Mucosa of descending colon (tissue), 3 donors: ENCODE measurements at regions of chr2 and their contacts with region 1.

Region 1: GRCh38 chr2:96951093-96951654 is 35.2 kb downstream of the FAM178B start:
- DNase-seq: peak; percentile 72 to 85 (median 81)
- ATAC-seq: peak; percentile 90
- H3K4me3 ChIP-seq: no peak overlapping the region
- H3K4me1 ChIP-seq: peaks cover 27% of the 10 kb centered on the region
- CTCF ChIP-seq: peak; percentile 85

Region 2: DNA sequence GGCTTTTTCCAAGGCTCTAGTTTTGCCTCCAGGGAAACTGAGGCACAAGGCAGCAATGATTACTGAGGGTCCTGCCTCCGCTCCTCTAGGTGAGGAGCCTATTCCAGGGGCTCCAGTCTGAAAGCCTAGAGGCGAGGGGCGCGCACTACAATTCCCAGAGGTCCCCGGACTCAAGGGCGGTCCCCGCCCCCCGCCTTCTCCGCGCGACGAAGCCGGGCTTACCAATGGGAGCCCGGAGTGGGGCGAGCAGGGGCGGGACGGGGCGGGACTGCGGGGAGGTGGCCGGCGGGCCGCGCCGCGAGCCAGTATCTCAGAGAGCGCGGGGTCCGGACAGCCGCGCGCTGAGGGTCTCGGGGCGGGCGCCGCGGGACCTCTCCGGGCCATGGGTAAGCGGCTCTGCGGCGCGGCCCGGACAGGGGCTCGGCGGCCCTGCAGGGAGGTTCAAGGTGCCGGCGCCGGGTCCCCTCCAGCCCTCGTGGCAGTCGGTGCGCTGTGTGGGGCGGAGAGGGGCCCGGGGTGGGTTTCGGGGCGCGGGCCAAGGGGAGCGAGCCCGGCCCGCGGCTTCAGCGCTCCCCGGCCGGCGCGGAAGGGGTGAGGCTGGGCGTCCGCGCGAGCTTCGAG is 414.6 kb before region 1 on chr2 and contains the start of gene ARID5A:
- intact Hi-C with region 1: no loop called
- DNase-seq: peak; percentile 95 to 97 (median 97)
- ATAC-seq: peak; percentile 78
- H3K4me3 ChIP-seq: peak within 1 kb of the TSS; percentile 59
- H3K4me1 ChIP-seq: peaks cover 52% of the 10 kb centered on the region
- CTCF ChIP-seq: no peak
- total RNA-seq, gene ARID5A: 4.8 to 17.6 (median 10.3) TPM

Region 3: GRCh38 chr2:96788442-96789244 is 162.5 kb before region 1 on chr2:
- intact Hi-C with region 1: no loop called
- DNase-seq: peak; percentile 84 to 90 (median 84)
- ATAC-seq: peak; percentile 89
- H3K4me3 ChIP-seq: no peak overlapping the region
- H3K4me1 ChIP-seq: peaks cover 45% of the 10 kb centered on the region
- CTCF ChIP-seq: no peak

Region 4: GRCh38 chr2:96856776-96857673 is 94.1 kb before region 1 on chr2:
- intact Hi-C with region 1: loop called in 1 of 2 experiments (anchors 5 kb)
- DNase-seq: peak in 1 of 3 donors; percentile 49
- ATAC-seq: peak; percentile 20
- H3K4me3 ChIP-seq: peak overlapping the region; percentile 39
- H3K4me1 ChIP-seq: peaks cover 22% of the 10 kb centered on the region
- CTCF ChIP-seq: no peak

Region 5: GRCh38 chr2:96907115-96908041 is 43.8 kb before region 1 on chr2:
- intact Hi-C with region 1: no loop called
- DNase-seq: peak; percentile 51 to 74 (median 66)
- ATAC-seq: peak; percentile 74
- H3K4me3 ChIP-seq: no peak overlapping the region
- H3K4me1 ChIP-seq: peaks cover 6% of the 10 kb centered on the region
- CTCF ChIP-seq: no peak